ENCODE measurements at regions of chr14 and their contacts with region 1.

Region 1: DNA sequence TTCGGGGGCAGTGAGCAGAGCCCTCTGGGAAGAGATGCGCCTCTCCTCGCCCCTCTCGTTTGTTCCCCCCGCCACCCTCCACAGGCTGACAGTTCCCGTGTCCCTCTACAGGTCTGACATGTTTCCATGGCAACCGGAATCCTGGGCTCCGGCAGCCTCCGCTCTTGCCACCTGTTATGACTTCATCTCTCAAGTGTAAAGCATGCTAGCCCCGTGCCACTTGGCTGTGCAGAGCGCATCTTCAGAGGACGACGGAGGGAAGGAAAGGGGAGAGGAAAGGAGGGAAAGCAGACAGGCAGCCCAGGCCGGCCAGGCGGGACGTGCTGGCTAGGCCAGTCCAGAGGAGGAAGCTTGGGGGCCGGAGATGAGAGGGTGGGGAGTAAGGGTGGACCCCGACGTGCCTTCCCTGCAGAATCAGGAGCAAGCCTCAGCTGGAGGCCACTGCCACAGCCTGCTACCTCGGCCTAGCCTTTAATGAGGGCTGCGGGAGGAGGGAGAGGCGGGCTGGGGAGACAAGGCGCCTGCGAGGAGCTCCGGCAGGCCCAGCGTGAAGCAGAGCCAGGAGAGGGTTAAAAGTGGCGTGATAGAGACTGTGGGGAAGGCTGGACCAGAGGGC is 214.3 kb downstream of the DPF3 start:
- DNase-seq: peak; percentile 15
- H3K4me3 ChIP-seq: no peak overlapping the region
- H3K27ac ChIP-seq: peak overlapping the region; percentile 94
- H3K4me1 ChIP-seq: peaks cover 27% of the 10 kb centered on the region
- H3K27me3 ChIP-seq: no peaks in the 10 kb centered on the region
- CTCF ChIP-seq: no peak
- POLR2A ChIP-seq: no peak

Region 2: DNA sequence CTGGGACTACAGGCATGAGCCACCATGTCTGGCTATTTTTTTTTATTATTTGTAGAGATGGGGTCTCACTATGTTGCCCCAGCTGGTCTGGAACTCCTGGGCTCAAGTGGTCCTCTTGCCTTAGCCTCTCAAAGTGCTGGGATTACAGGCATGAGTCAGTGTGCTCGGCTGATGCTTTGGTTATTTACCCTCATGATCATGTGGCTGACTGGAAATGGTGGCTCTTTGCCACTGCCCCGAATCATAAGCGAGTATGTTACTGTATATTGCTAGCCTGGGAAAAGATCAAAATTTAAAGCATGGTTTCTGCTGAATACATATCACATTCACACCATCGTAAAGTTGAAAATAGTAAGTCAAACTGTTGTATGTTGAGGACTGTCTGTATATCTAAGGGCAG is 646.3 kb before region 1 on chr14:
- CTCF ChIA-PET with region 1: no interaction called
- POLR2A ChIA-PET with region 1: no interaction called
- dilution Hi-C with region 1: no loop called
- intact Hi-C with region 1: no loop called
- DNase-seq: no peak
- H3K4me3 ChIP-seq: no peak overlapping the region
- H3K27ac ChIP-seq: no peak overlapping the region
- H3K4me1 ChIP-seq: no peaks in the 10 kb centered on the region
- H3K27me3 ChIP-seq: no peaks in the 10 kb centered on the region
- CTCF ChIP-seq: no peak
- POLR2A ChIP-seq: no peak

Region 3: DNA sequence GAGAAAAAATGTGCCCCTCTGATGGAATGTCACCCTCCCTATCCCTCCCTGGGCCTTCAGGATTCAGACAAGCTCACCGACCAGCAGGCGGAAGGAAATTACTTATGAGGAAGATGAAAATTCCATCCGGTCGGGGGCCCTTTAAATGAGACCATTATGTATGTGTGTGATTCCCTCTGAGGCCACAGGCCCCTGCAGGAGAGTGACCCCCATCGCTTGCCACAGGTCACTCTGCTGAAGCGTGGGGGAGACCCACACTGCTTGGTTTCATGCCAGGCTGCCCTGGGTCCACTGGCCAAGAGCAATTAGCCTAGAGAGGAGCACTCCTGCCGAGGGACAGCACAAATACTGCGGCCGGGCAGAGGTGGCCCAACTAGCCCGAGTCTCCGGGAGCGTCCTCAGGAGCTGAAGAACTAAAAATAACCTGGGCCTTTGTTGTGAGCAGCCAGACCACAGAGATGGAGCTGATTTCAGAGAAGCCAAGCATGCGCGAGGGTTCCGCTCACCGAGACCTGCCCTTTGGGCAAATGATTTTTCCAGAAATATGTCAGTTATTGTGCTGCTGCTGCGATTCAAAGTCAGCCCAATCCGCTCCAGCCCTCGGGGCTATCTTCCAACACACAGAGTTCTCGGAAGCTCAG is 62.1 kb before region 1 on chr14:
- CTCF ChIA-PET with region 1: interaction called, 4 read pairs
- POLR2A ChIA-PET with region 1: interaction called, 3 read pairs
- dilution Hi-C with region 1: no loop called
- intact Hi-C with region 1: loop called (anchors 1 kb)
- DNase-seq: peak; percentile 48
- H3K4me3 ChIP-seq: no peak overlapping the region
- H3K27ac ChIP-seq: peak overlapping the region; percentile 80
- H3K4me1 ChIP-seq: peaks cover 44% of the 10 kb centered on the region
- H3K27me3 ChIP-seq: no peaks in the 10 kb centered on the region
- CTCF ChIP-seq: no peak
- POLR2A ChIP-seq: no peak

Region 4: DNA sequence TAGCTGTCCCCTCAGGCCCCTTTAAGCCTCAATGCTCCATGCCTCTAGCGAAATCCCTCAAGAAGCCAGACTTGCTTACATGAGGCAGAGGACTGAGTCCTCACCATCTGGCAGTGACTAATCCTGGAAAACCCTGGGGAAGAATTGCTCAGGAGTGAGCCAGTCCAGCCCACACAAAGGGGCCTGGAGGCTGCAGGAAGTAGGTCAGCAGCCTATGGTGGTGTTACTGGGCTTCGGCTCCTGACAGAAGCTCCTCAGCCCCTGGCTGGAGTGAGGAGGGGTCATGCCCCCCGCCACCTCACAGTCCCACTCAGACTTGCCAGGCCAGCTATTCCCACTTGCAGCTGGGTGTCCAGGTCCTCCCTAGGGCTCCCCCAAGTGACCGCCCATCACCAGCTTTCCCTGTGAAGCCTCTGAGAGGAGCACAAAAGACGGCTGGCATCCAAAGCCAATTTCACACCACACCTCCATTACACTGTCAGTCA is 36.3 kb before region 1 on chr14:
- CTCF ChIA-PET with region 1: interaction called, 4 read pairs
- POLR2A ChIA-PET with region 1: no interaction called
- dilution Hi-C with region 1: no loop called
- intact Hi-C with region 1: loop called (anchors 1 kb)
- DNase-seq: peak; percentile 96
- H3K4me3 ChIP-seq: no peak overlapping the region
- H3K27ac ChIP-seq: peak overlapping the region; percentile 96
- H3K4me1 ChIP-seq: peaks cover 31% of the 10 kb centered on the region
- H3K27me3 ChIP-seq: no peaks in the 10 kb centered on the region
- CTCF ChIP-seq: peak in 1 of 2 donors; percentile 8
- POLR2A ChIP-seq: peak; percentile 47

Region 5: GRCh38 chr14:72801381-72801812 is 121.8 kb after region 1 on chr14:
- CTCF ChIA-PET with region 1: no interaction called
- POLR2A ChIA-PET with region 1: no interaction called
- dilution Hi-C with region 1: no loop called
- intact Hi-C with region 1: loop called (anchors 1 kb)
- DNase-seq: peak; percentile 93
- H3K4me3 ChIP-seq: no peak overlapping the region
- H3K27ac ChIP-seq: peak overlapping the region; percentile 95
- H3K4me1 ChIP-seq: peaks cover 22% of the 10 kb centered on the region
- H3K27me3 ChIP-seq: no peaks in the 10 kb centered on the region
- CTCF ChIP-seq: no peak
- POLR2A ChIP-seq: no peak

Measured in endothelial cell of umbilical vein (primary cell).